H1 (cell line): ENCODE measurements at regions of chr12 and their contacts with region 1.

Region 1: GRCh38 chr12:111482462-111482861 is 76.7 kb downstream of the SH2B3 start:
- DNase-seq: no peak
- H3K4me3 ChIP-seq: no peak overlapping the region
- H3K27ac ChIP-seq: no peak overlapping the region
- H3K4me1 ChIP-seq: no peaks in the 10 kb centered on the region
- H3K27me3 ChIP-seq: no peaks in the 10 kb centered on the region
- CTCF ChIP-seq: peak in 1 of 3 experiments; percentile 28; a peak in 1 of 4 replicates
- EP300 ChIP-seq: no peak
- POLR2A ChIP-seq: no peak
- RAD21 ChIP-seq: no peak

Region 2: GRCh38 chr12:111471236-111471635 is 11.2 kb before region 1 on chr12:
- CTCF ChIA-PET with region 1: interaction called, 17 read pairs
- POLR2A ChIA-PET with region 1: no interaction called
- DNase-seq: no peak
- H3K4me3 ChIP-seq: no peak overlapping the region
- H3K27ac ChIP-seq: no peak overlapping the region
- H3K4me1 ChIP-seq: no peaks in the 10 kb centered on the region
- H3K27me3 ChIP-seq: no peaks in the 10 kb centered on the region
- CTCF ChIP-seq: no peak
- EP300 ChIP-seq: no peak
- POLR2A ChIP-seq: no peak
- RAD21 ChIP-seq: no peak